ENCODE measurements at regions of chr1 and their contacts with region 1.

Region 1: DNA sequence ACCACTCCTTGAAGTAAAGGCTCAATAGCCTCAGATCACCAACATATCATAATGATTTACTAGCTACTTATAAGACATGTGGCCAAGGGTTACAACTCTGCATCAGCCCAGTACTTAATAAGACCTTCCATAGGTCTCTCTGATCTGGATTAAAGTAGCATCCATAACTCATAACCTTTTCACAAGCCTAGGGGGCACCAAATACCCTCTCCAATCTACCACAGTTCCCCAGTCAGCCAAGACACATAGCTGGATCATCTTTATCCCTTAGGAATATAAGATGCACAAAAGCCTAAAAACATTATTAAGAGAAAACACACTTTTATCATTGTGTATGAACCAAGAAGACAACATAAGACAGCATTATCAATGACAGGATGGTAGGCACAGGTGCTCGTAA is 22.1 kb downstream of the SSX2IP start:
- DNase-seq: peak in 1 of 2 donors; percentile 54
- ATAC-seq: peak in 2 of 3 donors; percentile 64
- H3K4me3 ChIP-seq: no peak overlapping the region
- H3K4me3 Mint-ChIP-seq: no peak overlapping the region
- H3K27ac ChIP-seq: no peak overlapping the region
- H3K27ac Mint-ChIP-seq: no peak overlapping the region
- H3K4me1 ChIP-seq: peaks cover 4% of the 10 kb centered on the region
- H3K4me1 Mint-ChIP-seq: peaks cover 14 to 26% of the 10 kb centered on the region in 2 donors
- H3K27me3 ChIP-seq: no peaks in the 10 kb centered on the region
- H3K27me3 Mint-ChIP-seq: no peaks in the 10 kb centered on the region
- CTCF ChIP-seq: no peak

Region 2: GRCh38 chr1:84090447-84091245 is 577.5 kb before region 1 on chr1:
- intact Hi-C with region 1: no loop called
- DNase-seq: peak in 1 of 2 donors; percentile 61
- ATAC-seq: peak; percentile 62 to 78 (median 74)
- H3K4me3 ChIP-seq: peak overlapping the region; percentile 30
- H3K4me3 Mint-ChIP-seq: peak overlapping the region; percentile 79
- H3K27ac ChIP-seq: peak overlapping the region; percentile 75
- H3K27ac Mint-ChIP-seq: peak overlapping the region; percentile 78 to 80
- H3K4me1 ChIP-seq: peaks cover 7% of the 10 kb centered on the region
- H3K4me1 Mint-ChIP-seq: peaks cover 18 to 19% of the 10 kb centered on the region in 2 donors
- H3K27me3 ChIP-seq: no peaks in the 10 kb centered on the region
- H3K27me3 Mint-ChIP-seq: no peaks in the 10 kb centered on the region
- CTCF ChIP-seq: no peak

Region 3: DNA sequence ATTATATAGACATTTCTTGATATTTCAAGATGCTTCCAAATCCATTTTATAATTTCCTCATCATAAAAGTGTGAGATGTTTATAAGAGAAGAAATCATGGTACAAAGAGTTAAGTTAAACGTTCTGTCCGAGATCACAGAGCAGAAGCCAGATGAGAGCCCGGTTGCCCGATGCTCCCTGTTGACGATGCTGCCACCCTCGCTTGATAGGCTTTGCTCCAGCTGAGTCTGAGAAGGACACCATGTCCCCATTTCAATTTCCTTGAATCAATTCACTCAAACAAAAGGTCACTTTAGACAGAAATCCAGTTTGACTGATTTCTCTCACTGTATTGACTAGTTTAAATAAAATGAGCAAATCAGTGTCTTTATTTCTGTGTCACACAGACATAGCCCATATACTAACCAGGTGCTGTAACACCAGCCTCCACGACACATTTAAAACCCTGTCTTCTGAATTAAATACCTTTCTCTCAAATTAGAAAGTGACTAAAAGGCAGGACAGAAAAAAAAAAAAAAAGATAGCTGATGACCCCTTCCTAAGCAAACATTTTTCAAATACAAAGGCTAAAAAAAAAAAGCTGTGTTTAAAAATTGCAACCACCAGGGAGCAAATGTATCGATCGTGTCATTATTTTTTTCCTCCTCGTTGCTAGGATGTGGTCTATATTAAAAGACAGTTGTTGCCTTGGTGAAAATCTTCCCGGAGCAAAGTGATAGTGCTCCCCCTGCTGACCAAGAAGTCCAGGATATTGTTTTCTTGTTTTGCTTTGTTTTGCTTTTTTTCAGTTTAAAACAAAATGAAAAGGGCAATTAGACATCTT is 234.7 kb before region 1 on chr1:
- intact Hi-C with region 1: no loop called
- DNase-seq: peak; percentile 21 to 92
- ATAC-seq: peak; percentile 71 to 85 (median 84)
- H3K4me3 ChIP-seq: peak overlapping the region; percentile 2
- H3K4me3 Mint-ChIP-seq: peak overlapping the region; percentile 72
- H3K27ac ChIP-seq: peak overlapping the region; percentile 69
- H3K27ac Mint-ChIP-seq: no peak overlapping the region
- H3K4me1 ChIP-seq: peaks cover 27% of the 10 kb centered on the region
- H3K4me1 Mint-ChIP-seq: peaks cover 4 to 8% of the 10 kb centered on the region in 2 donors
- H3K27me3 ChIP-seq: no peaks in the 10 kb centered on the region
- H3K27me3 Mint-ChIP-seq: no peaks in the 10 kb centered on the region
- CTCF ChIP-seq: peak; percentile 70

Region 4: DNA sequence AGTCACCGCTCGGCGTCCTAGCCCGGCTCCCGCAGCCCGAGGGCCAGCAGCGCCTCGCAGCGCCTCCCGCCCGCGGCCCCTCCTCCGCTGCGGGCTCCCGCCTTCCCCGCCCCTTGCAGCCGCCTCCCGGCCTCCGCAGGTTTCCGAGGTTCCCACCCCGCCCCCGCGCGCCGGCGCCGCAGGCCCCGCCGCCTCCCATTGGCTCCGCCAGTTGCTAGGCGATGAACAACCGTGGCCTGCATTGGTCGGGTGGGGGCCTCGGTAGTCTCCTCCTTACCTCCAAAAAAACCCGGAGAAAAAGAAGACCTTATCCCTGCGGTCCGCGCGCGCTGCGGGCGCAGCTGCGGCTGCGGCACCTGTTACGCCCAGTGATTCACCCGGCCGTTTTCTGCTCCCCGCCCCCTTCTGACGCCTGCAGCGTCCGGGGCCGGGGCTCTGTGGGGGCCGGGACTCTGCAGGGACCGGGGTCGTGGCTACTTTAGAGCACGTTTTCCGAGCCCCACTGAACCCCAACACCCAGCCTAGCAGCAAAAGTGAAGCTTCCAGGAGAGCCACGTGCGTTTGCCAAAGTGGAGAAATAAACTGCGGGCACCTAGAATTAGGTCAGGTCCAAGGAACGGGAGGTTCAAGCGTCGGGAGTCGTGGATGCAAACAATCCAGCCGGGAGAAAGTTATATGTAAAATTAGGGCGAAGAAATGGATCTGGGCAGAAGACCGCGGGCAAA is 22.4 kb after region 1 on chr1 and contains the start of gene SSX2IP:
- intact Hi-C with region 1: loop called (anchors 1 kb)
- DNase-seq: peak; percentile 98 to 99
- ATAC-seq: peak; percentile 75 to 94 (median 87)
- H3K4me3 ChIP-seq: peak within 1 kb of the TSS; percentile 60
- H3K4me3 Mint-ChIP-seq: peak within 1 kb of the TSS; percentile 97
- H3K27ac ChIP-seq: peak within 1 kb of the TSS; percentile 85
- H3K27ac Mint-ChIP-seq: peak within 1 kb of the TSS; percentile 99
- H3K4me1 ChIP-seq: peaks cover 23% of the 10 kb centered on the region
- H3K4me1 Mint-ChIP-seq: peaks cover 62 to 67% of the 10 kb centered on the region in 2 donors
- H3K27me3 ChIP-seq: no peaks in the 10 kb centered on the region
- H3K27me3 Mint-ChIP-seq: no peaks in the 10 kb centered on the region
- CTCF ChIP-seq: no peak
- total RNA-seq, gene SSX2IP: 24.2 to 35.8 (median 27.2) TPM

Region 5: GRCh38 chr1:84724128-84724860 is 56.1 kb after region 1 on chr1:
- intact Hi-C with region 1: loop called (anchors 1 kb)
- DNase-seq: peak; percentile 56 to 71
- ATAC-seq: peak; percentile 68 to 84 (median 72)
- H3K4me3 ChIP-seq: no peak overlapping the region
- H3K4me3 Mint-ChIP-seq: no peak overlapping the region
- H3K27ac ChIP-seq: no peak overlapping the region
- H3K27ac Mint-ChIP-seq: no peak overlapping the region
- H3K4me1 ChIP-seq: no peaks in the 10 kb centered on the region
- H3K4me1 Mint-ChIP-seq: peaks cover 0 to 9% of the 10 kb centered on the region in 2 donors
- H3K27me3 ChIP-seq: no peaks in the 10 kb centered on the region
- H3K27me3 Mint-ChIP-seq: peaks cover 3 to 20% of the 10 kb centered on the region in 2 donors
- CTCF ChIP-seq: peak; percentile 81

Region 6: GRCh38 chr1:84753516-84754385 is 85.6 kb after region 1 on chr1:
- intact Hi-C with region 1: loop called (anchors 1 kb)
- DNase-seq: peak; percentile 69 to 87
- ATAC-seq: peak; percentile 83 to 97 (median 96)
- H3K4me3 ChIP-seq: no peak overlapping the region
- H3K4me3 Mint-ChIP-seq: no peak overlapping the region
- H3K27ac ChIP-seq: no peak overlapping the region
- H3K27ac Mint-ChIP-seq: no peak overlapping the region
- H3K4me1 ChIP-seq: no peaks in the 10 kb centered on the region
- H3K4me1 Mint-ChIP-seq: peaks cover 4 to 5% of the 10 kb centered on the region in 2 donors
- H3K27me3 ChIP-seq: peaks cover 6% of the 10 kb centered on the region
- H3K27me3 Mint-ChIP-seq: peaks cover 10 to 37% of the 10 kb centered on the region in 2 donors
- CTCF ChIP-seq: peak; percentile 92